ENCODE measurements at regions of chr2 and their contacts with region 1.

Region 1: GRCh38 chr2:34012715-34013302 is 413.7 kb upstream of the FAM98A start:
- DNase-seq: peak; percentile 73
- ATAC-seq: peak; percentile 84
- H3K4me3 ChIP-seq: no peak overlapping the region
- H3K27ac ChIP-seq: no peak overlapping the region
- H3K4me1 ChIP-seq: no peaks in the 10 kb centered on the region
- H3K27me3 ChIP-seq: no peaks in the 10 kb centered on the region
- CTCF ChIP-seq: peak; percentile 93

Region 2: GRCh38 chr2:33822964-33823363 is 189.8 kb before region 1 on chr2:
- CTCF ChIA-PET with region 1: no interaction called
- POLR2A ChIA-PET with region 1: no interaction called
- intact Hi-C with region 1: no loop called
- DNase-seq: no peak
- ATAC-seq: no peak
- H3K4me3 ChIP-seq: no peak overlapping the region
- H3K27ac ChIP-seq: no peak overlapping the region
- H3K4me1 ChIP-seq: no peaks in the 10 kb centered on the region
- H3K27me3 ChIP-seq: 0 out of 2 replicates have a peak, but pooled peaks cover 6% of the 10 kb centered on the region
- CTCF ChIP-seq: no peak

Region 3: DNA sequence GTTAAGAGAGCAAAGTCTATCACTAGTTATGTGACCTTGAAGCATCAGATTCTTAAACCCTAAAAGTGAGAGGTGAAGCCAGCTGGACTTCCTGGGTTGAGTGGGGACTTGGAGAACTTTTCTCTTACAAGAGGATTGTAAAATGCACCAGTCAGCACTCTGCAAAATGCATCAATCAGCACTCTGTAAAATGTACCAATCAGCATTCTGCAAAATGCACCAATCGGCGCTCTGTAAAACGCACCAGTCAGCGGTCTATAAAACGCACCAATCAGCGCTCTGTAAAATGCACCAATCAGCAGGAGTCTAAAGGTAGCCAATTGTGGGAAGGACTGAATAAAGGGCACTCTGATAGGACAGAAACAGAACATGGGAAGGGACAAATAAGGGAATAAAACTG is 122.1 kb before region 1 on chr2:
- CTCF ChIA-PET with region 1: no interaction called
- POLR2A ChIA-PET with region 1: no interaction called
- intact Hi-C with region 1: no loop called
- DNase-seq: no peak
- ATAC-seq: no peak
- H3K4me3 ChIP-seq: no peak overlapping the region
- H3K27ac ChIP-seq: no peak overlapping the region
- H3K4me1 ChIP-seq: no peaks in the 10 kb centered on the region
- H3K27me3 ChIP-seq: no peaks in the 10 kb centered on the region
- CTCF ChIP-seq: no peak

Region 4: GRCh38 chr2:34570266-34570872 is 557.6 kb after region 1 on chr2:
- CTCF ChIA-PET with region 1: interaction called, 3 read pairs
- POLR2A ChIA-PET with region 1: no interaction called
- intact Hi-C with region 1: loop called (anchors 2 kb)
- DNase-seq: peak; percentile 53
- ATAC-seq: peak; percentile 64
- H3K4me3 ChIP-seq: no peak overlapping the region
- H3K27ac ChIP-seq: no peak overlapping the region
- H3K4me1 ChIP-seq: no peaks in the 10 kb centered on the region
- H3K27me3 ChIP-seq: no peaks in the 10 kb centered on the region
- CTCF ChIP-seq: peak; percentile 65

Region 5: DNA sequence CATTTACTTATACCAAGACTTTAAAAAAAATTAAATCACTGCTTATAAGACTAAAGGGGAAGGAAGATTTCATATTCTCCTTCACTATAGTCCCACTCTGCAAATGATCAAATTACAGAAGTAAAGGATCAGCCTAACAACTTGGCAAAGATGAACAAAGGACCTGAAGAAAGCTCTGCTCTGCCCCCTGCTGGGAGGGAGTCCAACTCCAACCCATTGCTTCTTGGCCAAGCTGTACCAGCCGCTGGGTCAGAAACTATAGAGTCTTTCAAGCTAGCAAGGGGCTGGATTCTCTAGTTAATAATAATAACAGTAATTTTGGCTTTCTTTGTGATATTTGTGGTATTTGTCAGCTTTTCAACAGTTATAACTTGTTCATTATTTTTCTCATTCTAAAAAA is 1415.7 kb after region 1 on chr2:
- CTCF ChIA-PET with region 1: no interaction called
- POLR2A ChIA-PET with region 1: no interaction called
- intact Hi-C with region 1: loop called (anchors 5 kb)
- DNase-seq: peak; percentile 48
- ATAC-seq: no peak
- H3K4me3 ChIP-seq: no peak overlapping the region
- H3K27ac ChIP-seq: no peak overlapping the region
- H3K4me1 ChIP-seq: no peaks in the 10 kb centered on the region
- H3K27me3 ChIP-seq: no peaks in the 10 kb centered on the region
- CTCF ChIP-seq: peak; percentile 75